ENCODE measurements at regions of chr11 and their contacts with region 1.

Region 1: GRCh38 chr11:59802639-59803176 is 7.9 kb downstream of the MRPL16 start:
- DNase-seq: peak in 2 of 5 donors; percentile 27 to 37
- ATAC-seq: peak; percentile 59 to 81 (median 72)
- H3K4me3 ChIP-seq: peak overlapping the region in 1 of 12 donors; percentile 35
- H3K27ac ChIP-seq: peak overlapping the region in 9 of 12 donors; percentile 34 to 69 (median 58)
- H3K4me1 ChIP-seq: peaks cover 0 to 18% (median 8%) of the 10 kb centered on the region in 12 donors
- H3K27me3 ChIP-seq: no peaks in the 10 kb centered on the region
- CTCF ChIP-seq: peak; percentile 45 to 85 (median 70)
- POLR2A ChIP-seq: no peak

Region 2: DNA sequence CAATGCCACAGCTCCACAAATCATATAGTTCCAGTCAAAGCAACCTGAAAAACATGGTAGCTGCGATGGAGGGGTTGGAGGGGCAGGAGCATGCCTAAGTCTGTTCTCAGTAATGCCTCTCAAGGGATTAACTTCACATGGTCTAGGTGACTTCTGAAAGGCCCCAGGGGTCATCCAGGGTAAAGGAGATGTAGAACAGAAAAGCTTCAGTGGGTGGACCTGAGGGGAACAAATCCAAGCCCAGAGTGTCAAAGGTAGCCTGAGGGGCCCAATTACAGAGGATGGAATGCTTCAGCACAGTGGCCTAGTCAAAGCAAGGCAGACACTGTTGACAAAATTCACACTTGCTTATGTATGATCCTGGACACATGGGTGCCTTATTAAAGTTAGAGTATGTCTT is 268.0 kb before region 1 on chr11:
- intact Hi-C with region 1: loop called in 6 of 10 experiments (anchors 2 to 10 kb)
- DNase-seq: no peak
- ATAC-seq: no peak
- H3K4me3 ChIP-seq: no peak overlapping the region
- H3K27ac ChIP-seq: no peak overlapping the region
- H3K4me1 ChIP-seq: peaks cover 0 to 10% (median 0%) of the 10 kb centered on the region in 12 donors
- H3K27me3 ChIP-seq: no peaks in the 10 kb centered on the region
- CTCF ChIP-seq: no peak
- POLR2A ChIP-seq: no peak

Region 3: DNA sequence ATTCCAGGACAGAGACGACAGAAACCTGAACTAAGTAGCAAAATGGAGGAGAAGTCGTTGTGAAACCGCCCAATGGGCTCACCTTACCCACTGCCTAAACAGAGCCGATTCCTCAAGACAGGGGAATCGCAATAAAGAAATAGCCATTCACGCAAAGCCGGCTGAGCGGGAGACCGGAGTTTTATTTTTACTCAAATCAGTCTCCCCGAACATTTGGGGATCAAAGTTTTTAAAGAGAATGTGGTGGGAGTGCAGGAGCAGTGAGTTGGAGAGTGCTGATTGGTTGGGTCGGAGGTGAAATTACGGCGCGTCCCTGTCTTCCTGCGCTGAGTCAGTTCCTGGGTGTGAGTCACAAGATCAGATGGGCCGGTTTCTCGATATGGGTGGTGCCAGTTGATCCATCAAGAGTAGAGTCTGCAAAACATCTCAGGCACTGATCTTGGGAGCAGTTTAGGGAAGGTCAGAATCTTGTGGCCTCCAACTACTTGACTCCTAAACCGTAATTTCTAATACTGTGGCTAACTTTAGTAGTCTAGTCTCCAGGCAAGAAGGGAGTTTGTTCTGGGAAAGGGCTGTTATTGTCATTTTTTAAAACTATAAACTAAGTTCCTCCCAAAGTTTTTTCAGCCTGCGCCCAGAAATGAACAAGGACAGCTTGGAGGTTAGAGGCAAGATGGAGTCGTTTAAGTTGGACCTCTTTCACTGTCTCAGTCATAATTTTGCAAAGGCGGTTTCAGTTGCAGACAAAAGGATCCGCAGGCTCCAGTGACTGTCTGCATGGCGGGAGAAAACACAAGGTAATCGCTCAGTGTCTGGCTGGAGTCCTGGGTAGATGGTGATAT is 257.3 kb before region 1 on chr11:
- intact Hi-C with region 1: loop called in 1 of 10 experiments (anchors 5 kb)
- DNase-seq: no peak
- ATAC-seq: no peak
- H3K4me3 ChIP-seq: no peak overlapping the region
- H3K27ac ChIP-seq: no peak overlapping the region
- H3K4me1 ChIP-seq: peaks cover 0 to 25% (median 0%) of the 10 kb centered on the region in 12 donors
- H3K27me3 ChIP-seq: no peaks in the 10 kb centered on the region
- CTCF ChIP-seq: no peak
- POLR2A ChIP-seq: no peak

Region 4: GRCh38 chr11:59560702-59561469 is 241.8 kb before region 1 on chr11:
- intact Hi-C with region 1: loop called in 1 of 10 experiments (anchors 10 kb)
- DNase-seq: peak; percentile 88 to 91 (median 90)
- ATAC-seq: peak; percentile 83 to 92 (median 88)
- H3K4me3 ChIP-seq: peak overlapping the region; percentile 70 to 96 (median 84)
- H3K27ac ChIP-seq: peak overlapping the region; percentile 59 to 92 (median 82)
- H3K4me1 ChIP-seq: peaks cover 0 to 37% (median 7%) of the 10 kb centered on the region in 12 donors
- H3K27me3 ChIP-seq: no peaks in the 10 kb centered on the region
- CTCF ChIP-seq: no peak
- POLR2A ChIP-seq: peak in 1 of 2 donors; percentile 24

Measured in heart left ventricle (tissue), 16 donors.